ENCODE measurements at regions of chr21 and their contacts with region 1.

Region 1: DNA sequence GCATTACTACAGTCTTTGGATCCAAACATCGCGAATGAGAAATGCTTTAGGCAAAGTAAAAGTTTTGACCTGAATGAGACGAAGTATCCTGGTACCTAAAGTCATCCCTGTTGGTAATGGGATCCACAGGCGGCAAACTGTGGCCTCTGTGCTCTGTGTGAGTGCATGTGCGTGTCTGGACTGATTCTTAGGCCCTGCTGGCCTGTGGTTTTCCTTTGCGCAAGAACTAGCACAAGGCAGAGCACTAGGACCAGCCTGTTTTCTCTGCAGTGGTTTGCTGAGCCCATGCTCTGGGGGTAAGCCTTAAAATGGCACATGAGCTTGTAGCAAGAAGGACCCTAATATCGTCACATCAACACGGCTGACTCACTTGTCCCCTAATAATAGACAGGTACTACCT is 251.2 kb downstream of the DSCAM start:
- DNase-seq: peak; percentile 81
- H3K4me3 ChIP-seq: no peak overlapping the region
- H3K27ac ChIP-seq: no peak overlapping the region
- H3K4me1 ChIP-seq: peaks cover 14% of the 10 kb centered on the region
- H3K27me3 ChIP-seq: no peaks in the 10 kb centered on the region
- CTCF ChIP-seq: no peak

Region 2: DNA sequence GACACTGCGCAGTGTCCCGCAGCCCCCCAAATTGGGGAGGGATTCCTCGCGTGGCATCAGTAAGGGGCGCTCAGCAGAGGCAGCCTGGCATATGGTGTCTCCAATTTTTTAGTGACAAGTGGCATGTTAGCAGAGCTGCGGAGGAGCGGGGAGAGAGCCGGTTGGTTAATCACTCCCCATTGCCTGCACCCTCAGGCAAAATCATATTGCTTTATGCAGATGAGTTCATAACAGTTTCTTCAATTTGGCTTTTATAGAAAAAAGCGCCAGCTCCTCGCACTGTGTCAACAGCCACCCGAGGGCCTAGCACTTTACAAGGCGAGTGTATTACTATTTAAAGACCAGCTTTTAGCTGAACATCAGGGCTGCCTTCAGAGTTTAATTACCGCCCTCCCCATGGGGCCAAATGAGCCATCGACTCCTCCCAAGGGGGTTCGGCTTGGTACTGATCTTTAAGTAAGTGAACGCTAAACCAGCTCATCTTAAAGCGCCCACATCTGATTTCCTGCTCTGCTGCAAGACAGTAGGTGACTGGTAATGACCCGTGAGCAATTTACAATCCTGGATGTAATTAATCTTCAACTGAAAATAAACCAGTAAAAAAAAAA is 47.8 kb before region 1 on chr21:
- CTCF ChIA-PET with region 1: interaction called, 45 read pairs
- dilution Hi-C with region 1: no loop called
- in situ Hi-C with region 1: no loop called
- intact Hi-C with region 1: no loop called
- DNase-seq: no peak
- H3K4me3 ChIP-seq: no peak overlapping the region
- H3K27ac ChIP-seq: no peak overlapping the region
- H3K4me1 ChIP-seq: no peaks in the 10 kb centered on the region
- H3K27me3 ChIP-seq: no peaks in the 10 kb centered on the region
- CTCF ChIP-seq: no peak